H1 (cell line): ENCODE measurements at regions of chrX and their contacts with region 1.

Region 1: GRCh38 chrX:120664081-120664480 is 34.2 kb upstream of the C1GALT1C1 start:
- DNase-seq: no peak
- H3K4me3 ChIP-seq: no peak overlapping the region
- H3K27ac ChIP-seq: no peak overlapping the region
- H3K4me1 ChIP-seq: peaks cover 0 to 2% (median 0%) of the 10 kb centered on the region in 4 experiments; a peak in 1 of 7 replicates
- H3K27me3 ChIP-seq: no peaks in the 10 kb centered on the region
- CTCF ChIP-seq: no peak
- EP300 ChIP-seq: no peak
- POLR2A ChIP-seq: no peak
- RAD21 ChIP-seq: no peak

Region 2: GRCh38 chrX:120446498-120446897 is 217.6 kb before region 1 on chrX:
- CTCF ChIA-PET with region 1: no interaction called
- POLR2A ChIA-PET with region 1: no interaction called
- DNase-seq: no peak
- H3K4me3 ChIP-seq: no peak overlapping the region
- H3K27ac ChIP-seq: no peak overlapping the region
- H3K4me1 ChIP-seq: no peaks in the 10 kb centered on the region
- H3K27me3 ChIP-seq: no peaks in the 10 kb centered on the region
- CTCF ChIP-seq: no peak
- EP300 ChIP-seq: no peak
- POLR2A ChIP-seq: no peak
- RAD21 ChIP-seq: no peak

Region 3: GRCh38 chrX:120477453-120477852 is 186.6 kb before region 1 on chrX:
- CTCF ChIA-PET with region 1: no interaction called
- POLR2A ChIA-PET with region 1: no interaction called
- DNase-seq: no peak
- H3K4me3 ChIP-seq: no peak overlapping the region
- H3K27ac ChIP-seq: no peak overlapping the region
- H3K4me1 ChIP-seq: no peaks in the 10 kb centered on the region
- H3K27me3 ChIP-seq: no peaks in the 10 kb centered on the region
- CTCF ChIP-seq: no peak
- EP300 ChIP-seq: no peak
- POLR2A ChIP-seq: no peak
- RAD21 ChIP-seq: no peak

Region 4: GRCh38 chrX:120499301-120500072 is 164.6 kb before region 1 on chrX:
- CTCF ChIA-PET with region 1: interaction called, 16 read pairs
- POLR2A ChIA-PET with region 1: no interaction called
- DNase-seq: no peak
- H3K4me3 ChIP-seq: no peak overlapping the region
- H3K27ac ChIP-seq: no peak overlapping the region
- H3K4me1 ChIP-seq: no peaks in the 10 kb centered on the region
- H3K27me3 ChIP-seq: no peaks in the 10 kb centered on the region
- CTCF ChIP-seq: no peak
- EP300 ChIP-seq: no peak
- POLR2A ChIP-seq: no peak
- RAD21 ChIP-seq: no peak

Region 5: GRCh38 chrX:120614816-120615215 is 49.3 kb before region 1 on chrX:
- CTCF ChIA-PET with region 1: no interaction called
- POLR2A ChIA-PET with region 1: no interaction called
- DNase-seq: no peak
- H3K4me3 ChIP-seq: no peak overlapping the region
- H3K27ac ChIP-seq: no peak overlapping the region
- H3K4me1 ChIP-seq: no peaks in the 10 kb centered on the region
- H3K27me3 ChIP-seq: no peaks in the 10 kb centered on the region
- CTCF ChIP-seq: no peak
- EP300 ChIP-seq: no peak
- POLR2A ChIP-seq: no peak
- RAD21 ChIP-seq: no peak

Region 6: GRCh38 chrX:120823556-120823955 is 159.5 kb after region 1 on chrX:
- CTCF ChIA-PET with region 1: no interaction called
- POLR2A ChIA-PET with region 1: no interaction called
- DNase-seq: no peak
- H3K4me3 ChIP-seq: no peak overlapping the region
- H3K27ac ChIP-seq: no peak overlapping the region
- H3K4me1 ChIP-seq: no peaks in the 10 kb centered on the region
- H3K27me3 ChIP-seq: peaks cover 0 to 3% (median 0%) of the 10 kb centered on the region in 4 experiments; a peak in 1 of 7 replicates
- CTCF ChIP-seq: no peak
- EP300 ChIP-seq: no peak
- POLR2A ChIP-seq: no peak
- RAD21 ChIP-seq: no peak